GM12878 (cell line): ENCODE measurements at regions of chr9 and their contacts with region 1.

Region 1: DNA sequence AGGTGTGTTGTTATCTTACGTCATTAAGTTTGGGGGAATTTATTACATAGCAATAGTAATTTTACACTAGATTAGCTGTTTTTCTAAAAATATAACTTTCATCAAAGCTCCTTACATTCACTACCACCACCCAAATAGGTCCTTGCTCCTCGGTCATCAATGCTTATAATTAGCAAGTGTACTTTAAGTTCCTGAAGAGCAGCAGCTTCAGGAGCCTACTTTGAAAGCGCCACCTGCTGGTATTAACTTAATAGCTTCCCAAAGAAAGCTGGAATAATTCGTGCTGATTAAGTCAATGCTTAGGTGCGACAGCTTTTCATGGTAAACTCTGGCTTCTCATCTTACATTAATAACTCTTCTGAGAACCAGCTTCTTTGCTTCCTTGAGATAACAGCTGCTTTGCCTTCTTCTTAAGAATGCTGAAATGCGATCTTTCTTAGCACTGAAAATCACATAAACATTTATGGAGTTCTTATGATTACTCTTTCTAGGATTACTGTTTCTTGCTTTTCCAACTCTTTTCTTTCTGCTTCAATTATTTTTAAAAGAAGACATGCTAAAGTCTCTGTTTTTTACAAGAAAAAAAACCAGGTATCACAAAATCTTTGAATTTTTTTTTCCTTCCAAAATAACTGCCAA is 10.0 kb upstream of the C5 start:
- DNase-seq: no peak
- ATAC-seq: peak; percentile 80
- H3K4me3 ChIP-seq: no peak overlapping the region
- H3K27ac ChIP-seq: no peak overlapping the region
- H3K4me1 ChIP-seq: no peaks in the 10 kb centered on the region
- H3K27me3 ChIP-seq: no peaks in the 10 kb centered on the region
- CTCF ChIP-seq: peak; percentile 63 to 70 (median 68)
- EP300 ChIP-seq: no peak
- POLR2A ChIP-seq: no peak
- RAD21 ChIP-seq: peak; percentile 64

Region 2: DNA sequence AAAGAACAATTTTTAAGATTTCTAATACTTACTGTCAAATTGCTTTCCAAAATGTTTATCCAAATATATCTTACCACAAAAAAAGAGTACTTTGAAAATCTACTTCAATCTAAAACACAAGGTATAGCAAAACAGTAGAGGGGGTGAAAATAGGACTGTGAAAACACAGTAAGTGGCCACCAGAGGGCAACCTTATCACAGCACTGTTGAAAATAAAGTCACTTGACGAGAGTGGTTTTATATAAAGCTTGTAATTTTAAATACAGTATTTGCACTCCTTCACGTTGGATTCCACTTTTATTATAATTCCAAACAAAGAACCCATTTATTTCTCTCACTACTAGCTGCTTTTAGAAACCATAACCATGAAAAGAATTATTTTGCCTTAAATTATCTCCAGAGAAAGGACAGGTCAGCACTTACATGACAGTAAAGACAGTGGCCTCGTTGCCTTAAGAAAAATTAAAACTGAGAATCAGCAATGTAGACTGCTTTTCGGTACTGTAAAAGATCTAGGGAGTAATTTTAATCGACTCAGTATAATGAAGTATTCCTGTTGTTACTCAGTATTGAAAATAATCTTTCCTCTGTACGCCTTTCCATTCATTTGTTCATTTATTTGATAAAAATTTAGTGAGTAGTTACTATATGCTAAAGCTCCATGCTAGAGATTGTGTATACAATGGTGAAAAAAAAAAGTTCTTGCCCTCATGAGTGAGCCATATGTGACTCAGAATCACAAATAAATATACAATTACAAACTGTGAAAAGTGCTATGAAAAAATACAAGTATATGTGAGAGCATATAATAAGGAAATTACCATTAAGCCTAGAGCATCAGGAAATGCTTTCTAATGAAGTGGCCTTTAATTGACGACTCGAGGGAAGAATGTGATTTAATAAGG is 440.1 kb before region 1 on chr9:
- CTCF ChIA-PET with region 1: interaction called, 5 read pairs
- POLR2A ChIA-PET with region 1: no interaction called
- RAD21 ChIA-PET with region 1: interaction called, 3 read pairs
- SMC1A ChIA-PET with region 1: interaction called, 3 read pairs
- in situ Hi-C with region 1: no loop called
- intact Hi-C with region 1: loop called (anchors 5 kb)
- DNase-seq: peak; percentile 16
- ATAC-seq: peak; percentile 97
- H3K4me3 ChIP-seq: no peak overlapping the region
- H3K27ac ChIP-seq: no peak overlapping the region
- H3K4me1 ChIP-seq: no peaks in the 10 kb centered on the region
- H3K27me3 ChIP-seq: no peaks in the 10 kb centered on the region
- CTCF ChIP-seq: peak; percentile 69 to 78 (median 75)
- EP300 ChIP-seq: no peak
- POLR2A ChIP-seq: no peak
- RAD21 ChIP-seq: peak; percentile 78

Region 3: GRCh38 chr9:120642129-120642770 is 417.9 kb before region 1 on chr9:
- CTCF ChIA-PET with region 1: no interaction called
- POLR2A ChIA-PET with region 1: no interaction called
- RAD21 ChIA-PET with region 1: no interaction called
- SMC1A ChIA-PET with region 1: no interaction called
- in situ Hi-C with region 1: no loop called
- intact Hi-C with region 1: no loop called
- DNase-seq: no peak
- ATAC-seq: no peak
- H3K4me3 ChIP-seq: no peak overlapping the region
- H3K27ac ChIP-seq: no peak overlapping the region
- H3K4me1 ChIP-seq: no peaks in the 10 kb centered on the region
- H3K27me3 ChIP-seq: no peaks in the 10 kb centered on the region
- CTCF ChIP-seq: no peak
- EP300 ChIP-seq: no peak
- POLR2A ChIP-seq: no peak
- RAD21 ChIP-seq: no peak

Region 4: GRCh38 chr9:120750421-120750820 is 309.7 kb before region 1 on chr9:
- CTCF ChIA-PET with region 1: interaction called, 109 read pairs
- POLR2A ChIA-PET with region 1: no interaction called
- RAD21 ChIA-PET with region 1: interaction called, 45 read pairs
- SMC1A ChIA-PET with region 1: interaction called, 73 read pairs
- in situ Hi-C with region 1: loop called (anchors 5 kb)
- intact Hi-C with region 1: no loop called
- DNase-seq: no peak
- ATAC-seq: no peak
- H3K4me3 ChIP-seq: no peak overlapping the region
- H3K27ac ChIP-seq: no peak overlapping the region
- H3K4me1 ChIP-seq: peaks cover 4% of the 10 kb centered on the region; the same call in 1 of the 2 replicates
- H3K27me3 ChIP-seq: no peaks in the 10 kb centered on the region
- CTCF ChIP-seq: no peak
- EP300 ChIP-seq: no peak
- POLR2A ChIP-seq: no peak
- RAD21 ChIP-seq: no peak

Region 5: DNA sequence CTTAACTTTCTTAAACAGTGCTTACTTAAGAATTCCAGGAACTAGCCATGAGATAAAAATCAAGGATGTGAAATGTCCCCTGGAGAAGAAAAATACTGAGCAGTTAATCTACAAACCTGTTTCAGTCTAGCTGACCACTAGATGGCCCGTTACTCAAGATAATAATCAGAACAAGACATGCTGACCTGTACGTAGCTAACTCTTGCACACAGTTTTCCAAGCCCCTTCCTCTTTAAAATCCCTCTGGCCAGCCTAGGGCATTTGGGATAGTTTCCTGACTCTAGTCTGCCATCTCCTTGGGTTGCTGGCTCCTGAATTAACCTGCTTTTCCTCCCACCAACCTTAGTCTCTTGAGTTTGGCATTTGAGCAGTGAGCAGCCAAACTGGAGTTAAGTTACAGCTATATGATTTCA is 74.3 kb before region 1 on chr9:
- CTCF ChIA-PET with region 1: interaction called, 115 read pairs
- POLR2A ChIA-PET with region 1: no interaction called
- RAD21 ChIA-PET with region 1: interaction called, 35 read pairs
- SMC1A ChIA-PET with region 1: interaction called, 32 read pairs
- in situ Hi-C with region 1: no loop called
- intact Hi-C with region 1: loop called (anchors 2 kb)
- DNase-seq: no peak
- ATAC-seq: peak; percentile 85
- H3K4me3 ChIP-seq: no peak overlapping the region
- H3K27ac ChIP-seq: no peak overlapping the region
- H3K4me1 ChIP-seq: peaks cover 4% of the 10 kb centered on the region; the same call in 1 of the 2 replicates
- H3K27me3 ChIP-seq: no peaks in the 10 kb centered on the region
- CTCF ChIP-seq: peak; percentile 64 to 70 (median 64)
- EP300 ChIP-seq: no peak
- POLR2A ChIP-seq: no peak
- RAD21 ChIP-seq: peak; percentile 74

Region 6: DNA sequence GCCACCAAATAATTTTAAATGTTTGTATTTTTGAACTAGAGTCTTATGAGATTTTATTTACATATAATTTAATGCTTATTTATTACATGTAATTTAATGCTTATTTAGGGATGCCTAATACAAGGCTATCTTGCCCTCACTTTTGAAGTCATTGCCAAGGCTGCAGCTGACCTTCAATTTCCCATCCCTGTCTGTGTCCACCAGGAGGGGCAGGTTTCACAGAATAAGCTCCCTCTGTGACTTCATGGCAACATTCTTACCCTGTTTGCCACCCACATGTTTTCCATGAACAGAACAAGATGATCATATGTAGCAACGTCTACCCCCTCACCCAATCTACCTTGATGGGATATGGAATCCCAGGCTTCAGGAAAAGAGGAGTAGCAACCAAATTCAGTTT is 37.1 kb before region 1 on chr9:
- CTCF ChIA-PET with region 1: interaction called, 13 read pairs
- POLR2A ChIA-PET with region 1: no interaction called
- RAD21 ChIA-PET with region 1: interaction called, 4 read pairs
- SMC1A ChIA-PET with region 1: no interaction called
- in situ Hi-C with region 1: no loop called
- intact Hi-C with region 1: no loop called
- DNase-seq: no peak
- ATAC-seq: 0 out of 3 replicates have a peak, but pooled peaks have one; percentile 32
- H3K4me3 ChIP-seq: no peak overlapping the region
- H3K27ac ChIP-seq: no peak overlapping the region
- H3K4me1 ChIP-seq: no peaks in the 10 kb centered on the region
- H3K27me3 ChIP-seq: no peaks in the 10 kb centered on the region
- CTCF ChIP-seq: peak in 1 of 3 experiments; percentile 13; a peak in 1 of 6 replicates
- EP300 ChIP-seq: no peak
- POLR2A ChIP-seq: no peak
- RAD21 ChIP-seq: no peak

Region 7: DNA sequence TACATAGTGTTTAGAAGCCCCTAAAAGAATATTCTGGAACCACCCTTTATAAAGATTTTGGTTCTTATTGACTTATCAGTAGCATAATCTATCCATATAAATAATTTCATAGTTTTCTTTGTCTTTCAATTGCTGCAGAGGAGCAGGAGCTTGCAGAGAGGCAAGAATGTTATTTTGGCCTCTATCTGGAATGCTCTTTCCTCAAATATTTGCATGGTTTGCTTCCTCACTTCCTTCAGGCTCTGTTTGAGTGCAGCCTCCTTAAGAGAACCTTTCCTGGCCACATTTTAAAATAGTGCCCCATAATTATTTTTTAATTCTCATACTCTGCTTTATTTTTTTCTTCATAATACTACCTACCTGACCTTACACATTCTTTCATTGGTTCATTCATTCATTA is 11.5 kb before region 1 on chr9:
- CTCF ChIA-PET with region 1: interaction called, 86 read pairs
- POLR2A ChIA-PET with region 1: no interaction called
- RAD21 ChIA-PET with region 1: no interaction called
- SMC1A ChIA-PET with region 1: interaction called, 45 read pairs
- in situ Hi-C with region 1: no loop called
- intact Hi-C with region 1: no loop called
- DNase-seq: no peak
- ATAC-seq: no peak
- H3K4me3 ChIP-seq: no peak overlapping the region
- H3K27ac ChIP-seq: no peak overlapping the region
- H3K4me1 ChIP-seq: no peaks in the 10 kb centered on the region
- H3K27me3 ChIP-seq: no peaks in the 10 kb centered on the region
- CTCF ChIP-seq: no peak
- EP300 ChIP-seq: no peak
- POLR2A ChIP-seq: no peak
- RAD21 ChIP-seq: no peak

Region 8: GRCh38 chr9:121082075-121082474 is 22.0 kb after region 1 on chr9:
- CTCF ChIA-PET with region 1: interaction called, 23 read pairs
- POLR2A ChIA-PET with region 1: no interaction called
- RAD21 ChIA-PET with region 1: interaction called, 6 read pairs
- SMC1A ChIA-PET with region 1: interaction called, 6 read pairs
- in situ Hi-C with region 1: no loop called
- intact Hi-C with region 1: no loop called
- DNase-seq: no peak
- ATAC-seq: peak; percentile 54
- H3K4me3 ChIP-seq: no peak overlapping the region
- H3K27ac ChIP-seq: no peak overlapping the region; the same call in 1 of the 2 replicates
- H3K4me1 ChIP-seq: no peaks in the 10 kb centered on the region
- H3K27me3 ChIP-seq: no peaks in the 10 kb centered on the region
- CTCF ChIP-seq: no peak
- EP300 ChIP-seq: no peak
- POLR2A ChIP-seq: no peak
- RAD21 ChIP-seq: no peak

Region 9: DNA sequence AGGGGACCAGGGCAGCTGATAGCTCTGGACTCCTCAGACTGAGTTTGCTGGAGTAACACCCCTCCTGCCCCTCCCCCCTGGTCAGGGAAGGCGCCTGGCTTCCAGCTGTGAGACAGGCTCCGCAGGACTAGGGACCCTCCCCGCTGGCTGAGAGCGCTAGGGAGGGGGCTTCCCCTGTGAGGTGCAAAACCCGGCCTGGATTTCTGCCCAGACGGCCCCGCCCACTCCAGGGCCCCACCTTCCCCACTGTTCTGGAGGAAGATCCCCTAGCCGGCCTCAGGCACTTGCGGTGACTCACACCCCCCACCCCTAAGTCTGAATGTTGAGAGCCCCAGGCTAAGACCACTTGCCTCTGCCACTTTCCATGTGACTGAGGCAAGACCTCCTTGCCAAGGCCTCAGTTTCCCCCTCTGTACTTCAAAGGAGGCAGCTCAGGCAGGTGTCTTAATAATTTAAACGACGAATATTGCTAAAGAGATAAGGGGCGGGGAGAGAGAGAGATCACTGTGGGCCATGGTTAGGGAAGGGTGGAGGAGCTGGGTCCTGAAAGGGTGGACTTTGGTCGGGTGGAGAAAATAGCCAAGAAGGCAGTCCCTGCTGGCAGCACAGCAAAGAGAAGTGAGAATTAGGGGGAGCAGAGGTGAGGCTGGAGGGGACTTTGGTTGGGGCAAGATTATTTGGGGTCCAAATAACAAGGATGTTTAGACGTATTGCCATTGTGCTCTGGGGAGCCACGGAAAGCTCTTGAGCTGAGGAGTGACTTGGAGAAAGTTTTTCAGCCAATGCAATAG is 590.3 kb after region 1 on chr9:
- CTCF ChIA-PET with region 1: no interaction called
- POLR2A ChIA-PET with region 1: no interaction called
- RAD21 ChIA-PET with region 1: no interaction called
- SMC1A ChIA-PET with region 1: no interaction called
- in situ Hi-C with region 1: no loop called
- intact Hi-C with region 1: no loop called
- DNase-seq: no peak
- ATAC-seq: peak; percentile 38; the same call in 1 of the 3 replicates
- H3K4me3 ChIP-seq: no peak overlapping the region
- H3K27ac ChIP-seq: no peak overlapping the region
- H3K4me1 ChIP-seq: no peaks in the 10 kb centered on the region
- H3K27me3 ChIP-seq: peaks cover 21 to 26% of the 10 kb centered on the region in 2 experiments
- CTCF ChIP-seq: no peak
- EP300 ChIP-seq: no peak
- POLR2A ChIP-seq: no peak
- RAD21 ChIP-seq: no peak